ENCODE measurements at regions of chr20 and their contacts with region 1.

Region 1: GRCh38 chr20:45373353-45374100 is 4.6 kb downstream of the TP53TG5 start:
- DNase-seq: peak; percentile 96
- H3K4me3 Mint-ChIP-seq: peak overlapping the region; percentile 83
- H3K27ac Mint-ChIP-seq: peak overlapping the region; percentile 89
- H3K4me1 Mint-ChIP-seq: peaks cover 26% of the 10 kb centered on the region
- H3K27me3 Mint-ChIP-seq: no peaks in the 10 kb centered on the region

Region 2: GRCh38 chr20:45355209-45356084 is 18.1 kb before region 1 on chr20:
- CTCF ChIA-PET with region 1: interaction called, 118 read pairs
- intact Hi-C with region 1: no loop called
- DNase-seq: peak; percentile 56
- H3K4me3 Mint-ChIP-seq: peak overlapping the region; percentile 28
- H3K27ac Mint-ChIP-seq: peak overlapping the region; percentile 91
- H3K4me1 Mint-ChIP-seq: peaks cover 45% of the 10 kb centered on the region
- H3K27me3 Mint-ChIP-seq: no peaks in the 10 kb centered on the region

Region 3: GRCh38 chr20:45415774-45416637 is 42.5 kb after region 1 on chr20 and contains the start of gene PIGT:
- CTCF ChIA-PET with region 1: interaction called, 12 read pairs
- intact Hi-C with region 1: loop called (anchors 1 kb)
- DNase-seq: peak; percentile 92
- H3K4me3 Mint-ChIP-seq: peak within 1 kb of the TSS; percentile 93
- H3K27ac Mint-ChIP-seq: peak within 1 kb of the TSS; percentile 97
- H3K4me1 Mint-ChIP-seq: peaks cover 42% of the 10 kb centered on the region
- H3K27me3 Mint-ChIP-seq: no peaks in the 10 kb centered on the region
- total RNA-seq, gene PIGT: 37.7 to 43.8 TPM

Region 4: GRCh38 chr20:45429618-45430017 is 56.1 kb after region 1 on chr20:
- CTCF ChIA-PET with region 1: interaction called, 209 read pairs
- intact Hi-C with region 1: no loop called
- DNase-seq: no peak
- H3K4me3 Mint-ChIP-seq: no peak overlapping the region
- H3K27ac Mint-ChIP-seq: no peak overlapping the region
- H3K4me1 Mint-ChIP-seq: peaks cover 6% of the 10 kb centered on the region
- H3K27me3 Mint-ChIP-seq: no peaks in the 10 kb centered on the region

Region 5: DNA sequence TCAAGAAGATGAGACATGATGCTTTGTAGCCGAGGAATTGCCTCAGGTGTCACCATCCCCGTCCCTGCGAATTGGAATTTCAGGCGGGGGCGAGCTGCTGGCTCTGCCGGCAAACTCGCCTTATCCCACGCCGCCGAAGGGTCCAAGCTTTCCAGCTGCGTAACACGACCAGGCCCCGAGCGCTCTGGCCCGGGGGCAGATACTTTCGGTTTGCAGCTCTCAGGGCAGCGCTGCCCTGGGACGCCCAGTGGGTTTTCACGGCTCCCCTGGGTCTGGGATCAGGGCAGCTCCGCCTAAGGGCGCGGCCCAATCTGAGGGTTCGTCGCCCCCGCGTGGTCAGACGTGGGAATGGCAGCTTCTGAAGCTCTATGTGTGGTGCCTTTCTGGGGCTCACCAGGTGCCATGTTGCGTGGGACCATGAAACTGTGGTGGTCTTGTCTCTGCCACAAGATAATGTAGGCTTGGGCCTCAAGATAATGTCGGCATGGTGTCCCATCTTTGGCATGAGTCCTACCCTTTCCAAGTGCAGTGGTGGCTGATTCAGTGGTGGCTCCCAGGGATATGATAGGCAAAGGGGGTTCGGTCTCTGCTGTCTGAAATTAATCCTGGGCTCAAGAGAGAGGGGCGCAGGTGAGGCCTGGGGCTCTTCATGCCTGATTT is 63.3 kb after region 1 on chr20:
- CTCF ChIA-PET with region 1: interaction called, 209 read pairs
- intact Hi-C with region 1: loop called (anchors 1 kb)
- DNase-seq: peak; percentile 91
- H3K4me3 Mint-ChIP-seq: peak overlapping the region; percentile 64
- H3K27ac Mint-ChIP-seq: no peak overlapping the region
- H3K4me1 Mint-ChIP-seq: peaks cover 10% of the 10 kb centered on the region
- H3K27me3 Mint-ChIP-seq: no peaks in the 10 kb centered on the region

Region 6: GRCh38 chr20:45444050-45444449 is 70.5 kb after region 1 on chr20:
- CTCF ChIA-PET with region 1: interaction called, 209 read pairs
- intact Hi-C with region 1: no loop called
- DNase-seq: peak; percentile 30
- H3K4me3 Mint-ChIP-seq: no peak overlapping the region
- H3K27ac Mint-ChIP-seq: no peak overlapping the region
- H3K4me1 Mint-ChIP-seq: peaks cover 14% of the 10 kb centered on the region
- H3K27me3 Mint-ChIP-seq: no peaks in the 10 kb centered on the region

Region 7: GRCh38 chr20:45450097-45450818 is 76.7 kb after region 1 on chr20:
- CTCF ChIA-PET with region 1: interaction called, 64 read pairs
- intact Hi-C with region 1: no loop called
- DNase-seq: peak; percentile 30
- H3K4me3 Mint-ChIP-seq: no peak overlapping the region
- H3K27ac Mint-ChIP-seq: no peak overlapping the region
- H3K4me1 Mint-ChIP-seq: no peaks in the 10 kb centered on the region
- H3K27me3 Mint-ChIP-seq: no peaks in the 10 kb centered on the region